ENCODE measurements at regions of chr12 and their contacts with region 1.

Region 1: GRCh38 chr12:4269279-4269991 is 4.1 kb upstream of the CCND2 start:
- DNase-seq: peak; percentile 84
- ATAC-seq: peak; percentile 30
- H3K4me3 Mint-ChIP-seq: peak overlapping the region; percentile 91
- H3K27ac Mint-ChIP-seq: peak overlapping the region; percentile 95
- H3K4me1 Mint-ChIP-seq: peaks cover 33% of the 10 kb centered on the region
- H3K27me3 Mint-ChIP-seq: no peaks in the 10 kb centered on the region
- CTCF ChIP-seq: no peak

Region 2: GRCh38 chr12:4118017-4118510 is 151.4 kb before region 1 on chr12:
- CTCF ChIA-PET with region 1: no interaction called
- POLR2A ChIA-PET with region 1: interaction called, 44 read pairs
- intact Hi-C with region 1: loop called (anchors 1 kb)
- DNase-seq: no peak
- ATAC-seq: peak; percentile 80
- H3K4me3 Mint-ChIP-seq: peak overlapping the region; percentile 69
- H3K27ac Mint-ChIP-seq: peak overlapping the region; percentile 81
- H3K4me1 Mint-ChIP-seq: peaks cover 56% of the 10 kb centered on the region
- H3K27me3 Mint-ChIP-seq: no peaks in the 10 kb centered on the region
- CTCF ChIP-seq: no peak

Region 3: DNA sequence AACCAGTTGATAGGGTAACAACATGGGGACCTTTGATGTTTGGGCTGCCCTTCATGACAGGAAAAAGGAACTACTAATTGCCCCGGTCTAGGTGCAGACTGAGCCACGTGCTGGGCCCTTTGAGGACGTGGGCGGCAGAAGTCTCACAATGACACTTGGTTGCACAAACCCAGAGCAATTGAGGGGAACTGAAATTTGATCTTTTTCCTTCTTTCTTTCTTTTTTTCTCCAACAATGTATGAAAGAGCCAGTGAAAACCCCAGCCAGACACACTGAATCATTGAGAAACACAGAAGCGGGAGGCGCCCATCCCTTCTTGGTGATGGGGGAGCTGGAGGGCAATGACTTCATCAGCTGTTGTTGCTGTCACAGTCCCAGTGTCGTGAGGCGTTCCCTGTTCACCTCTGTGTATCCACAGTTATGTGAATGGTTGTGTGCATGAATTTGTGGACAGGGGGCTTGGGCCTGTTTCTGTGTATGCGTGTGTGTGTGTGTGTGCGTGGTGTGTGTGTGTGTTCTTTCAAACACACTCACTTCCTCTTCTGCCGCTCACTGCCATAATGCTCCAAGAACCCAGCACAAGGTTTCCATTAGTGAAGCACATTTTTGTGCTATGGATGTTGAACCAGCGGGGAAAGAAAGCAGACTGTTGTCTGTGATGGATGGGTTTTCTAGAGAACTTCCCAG is 133.4 kb before region 1 on chr12:
- CTCF ChIA-PET with region 1: interaction called, 4 read pairs
- POLR2A ChIA-PET with region 1: interaction called, 55 read pairs
- intact Hi-C with region 1: loop called (anchors 1 kb)
- DNase-seq: peak; percentile 46
- ATAC-seq: peak; percentile 83
- H3K4me3 Mint-ChIP-seq: peak overlapping the region; percentile 47
- H3K27ac Mint-ChIP-seq: peak overlapping the region; percentile 93
- H3K4me1 Mint-ChIP-seq: peaks cover 54% of the 10 kb centered on the region
- H3K27me3 Mint-ChIP-seq: no peaks in the 10 kb centered on the region
- CTCF ChIP-seq: no peak

Region 4: GRCh38 chr12:4164559-4165558 is 104.6 kb before region 1 on chr12:
- CTCF ChIA-PET with region 1: interaction called, 3 read pairs
- POLR2A ChIA-PET with region 1: interaction called, 199 read pairs
- intact Hi-C with region 1: loop called (anchors 1 kb)
- DNase-seq: peak; percentile 60
- ATAC-seq: peak; percentile 75
- H3K4me3 Mint-ChIP-seq: peak overlapping the region; percentile 89
- H3K27ac Mint-ChIP-seq: peak overlapping the region; percentile 95
- H3K4me1 Mint-ChIP-seq: peaks cover 42% of the 10 kb centered on the region
- H3K27me3 Mint-ChIP-seq: no peaks in the 10 kb centered on the region
- CTCF ChIP-seq: no peak

Region 5: DNA sequence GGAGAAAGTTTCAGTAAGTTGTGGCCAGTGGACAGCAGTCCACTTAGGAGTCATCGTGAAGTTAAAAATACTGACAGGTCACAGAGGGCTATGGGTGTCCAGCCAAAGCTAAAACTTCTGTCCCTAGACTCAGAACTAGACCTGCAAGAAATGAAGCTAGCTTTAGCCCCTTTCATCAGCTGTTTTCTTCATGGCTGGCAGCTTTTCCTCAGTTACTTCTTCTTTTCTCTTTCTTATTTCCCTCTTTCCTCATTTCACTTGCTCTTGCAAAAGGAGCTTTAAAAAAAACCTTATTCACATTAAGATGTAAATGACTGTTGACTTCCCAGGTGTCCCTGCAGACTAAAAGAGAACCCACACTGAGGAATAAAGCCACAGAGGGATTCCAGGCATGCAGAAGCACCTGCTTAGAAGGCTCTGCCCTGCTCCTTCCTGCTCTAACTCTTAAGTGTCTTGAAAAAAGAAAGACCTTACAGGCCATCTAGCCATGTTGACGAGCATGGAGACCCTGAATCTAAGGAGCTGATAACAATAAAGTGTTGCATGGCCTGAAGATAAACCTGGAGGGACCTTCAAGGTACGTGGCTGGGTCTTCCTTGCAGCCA is 65.6 kb before region 1 on chr12:
- CTCF ChIA-PET with region 1: interaction called, 4 read pairs
- POLR2A ChIA-PET with region 1: interaction called, 52 read pairs
- intact Hi-C with region 1: loop called (anchors 1 kb)
- DNase-seq: no peak
- ATAC-seq: peak; percentile 15
- H3K4me3 Mint-ChIP-seq: peak overlapping the region; percentile 1
- H3K27ac Mint-ChIP-seq: peak overlapping the region; percentile 63
- H3K4me1 Mint-ChIP-seq: peaks cover 53% of the 10 kb centered on the region
- H3K27me3 Mint-ChIP-seq: no peaks in the 10 kb centered on the region
- CTCF ChIP-seq: no peak

Region 6: DNA sequence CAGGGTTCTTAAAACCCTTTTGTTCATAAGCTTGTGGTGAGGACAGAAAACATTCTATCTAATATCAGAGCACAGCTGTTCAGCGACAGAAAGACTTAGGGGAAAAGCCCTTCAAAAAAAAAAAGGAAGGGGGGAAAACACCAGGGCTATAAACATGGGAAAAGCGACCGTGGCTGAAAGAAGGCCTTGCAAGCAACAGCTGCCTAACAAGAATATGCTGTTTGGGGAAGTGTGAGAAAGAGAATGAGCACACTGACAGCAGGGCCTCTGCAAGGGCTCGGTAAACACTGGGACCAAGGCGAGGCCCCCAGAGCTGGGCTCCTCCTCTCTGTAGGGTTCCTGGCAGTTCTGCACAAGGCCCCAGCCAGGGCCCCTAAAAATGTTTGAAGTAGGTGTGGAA is 23.3 kb before region 1 on chr12:
- CTCF ChIA-PET with region 1: interaction called, 4 read pairs
- POLR2A ChIA-PET with region 1: interaction called, 16 read pairs
- intact Hi-C with region 1: no loop called
- DNase-seq: no peak
- ATAC-seq: peak; percentile 28
- H3K4me3 Mint-ChIP-seq: no peak overlapping the region
- H3K27ac Mint-ChIP-seq: no peak overlapping the region
- H3K4me1 Mint-ChIP-seq: peaks cover 9% of the 10 kb centered on the region
- H3K27me3 Mint-ChIP-seq: peaks cover 6% of the 10 kb centered on the region
- CTCF ChIP-seq: no peak

Region 7: GRCh38 chr12:4392223-4392742 is 122.8 kb after region 1 on chr12:
- CTCF ChIA-PET with region 1: no interaction called
- POLR2A ChIA-PET with region 1: no interaction called
- intact Hi-C with region 1: no loop called
- DNase-seq: no peak
- ATAC-seq: no peak
- H3K4me3 Mint-ChIP-seq: no peak overlapping the region
- H3K27ac Mint-ChIP-seq: no peak overlapping the region
- H3K4me1 Mint-ChIP-seq: no peaks in the 10 kb centered on the region
- H3K27me3 Mint-ChIP-seq: peaks cover 42% of the 10 kb centered on the region
- CTCF ChIP-seq: no peak

Measured in activated B cell treated with CpG ODN at 0.5 μM for 24 hours (primary cell).